Mammary epithelial cell (primary cell): ENCODE measurements at regions of chr6 and their contacts with region 1.

Region 1: GRCh38 chr6:110482774-110483398 is 6.5 kb upstream of the SLC22A16 start:
- DNase-seq: no peak
- H3K4me3 ChIP-seq: no peak overlapping the region
- H3K27ac ChIP-seq: no peak overlapping the region
- H3K4me1 ChIP-seq: peaks cover 12% of the 10 kb centered on the region
- H3K27me3 ChIP-seq: no peaks in the 10 kb centered on the region
- CTCF ChIP-seq: no peak

Region 2: DNA sequence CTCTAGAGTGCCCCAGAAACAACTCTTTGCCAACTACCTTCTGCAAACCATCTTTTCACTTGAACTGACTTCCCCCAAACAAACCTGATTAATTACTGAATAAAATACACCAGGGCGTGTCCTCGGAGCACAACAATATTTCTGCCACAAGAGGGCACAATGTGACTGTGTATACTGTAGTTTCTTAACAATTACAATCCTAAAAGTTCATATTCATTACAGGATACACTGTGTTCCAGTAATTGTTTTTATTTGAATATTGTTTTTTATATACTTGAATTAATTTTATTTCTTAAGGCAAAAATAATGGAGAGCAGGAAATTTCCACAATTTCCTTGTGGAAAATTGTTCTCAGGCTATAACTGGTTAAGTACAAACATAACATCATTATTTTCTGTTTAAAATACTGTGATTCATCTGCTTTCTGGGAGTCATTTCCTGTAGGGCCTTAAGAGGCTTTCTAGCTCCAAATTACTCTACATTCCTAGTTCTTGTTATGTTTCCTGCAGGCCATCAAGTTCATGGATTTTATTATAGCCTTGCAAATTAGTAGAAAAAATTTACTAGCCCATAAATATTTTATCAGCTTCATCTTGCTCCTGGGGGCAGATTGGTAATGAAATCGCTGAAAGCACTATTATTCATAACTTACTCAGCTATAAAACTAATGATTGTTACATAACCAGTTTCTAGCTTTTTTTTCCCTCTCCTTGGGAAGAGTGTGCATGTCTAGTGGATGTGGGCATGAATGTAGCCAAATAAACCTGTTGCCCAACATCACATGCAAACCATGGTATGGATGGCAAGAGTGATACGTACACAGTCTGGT is 45.4 kb after region 1 on chr6:
- CTCF ChIA-PET with region 1: no interaction called
- dilution Hi-C with region 1: no loop called
- in situ Hi-C with region 1: no loop called
- intact Hi-C with region 1: no loop called
- DNase-seq: peak; percentile 97
- H3K4me3 ChIP-seq: no peak overlapping the region
- H3K27ac ChIP-seq: peak overlapping the region; percentile 96
- H3K4me1 ChIP-seq: peaks cover 40% of the 10 kb centered on the region
- H3K27me3 ChIP-seq: no peaks in the 10 kb centered on the region
- CTCF ChIP-seq: peak; percentile 71 to 81

Region 3: DNA sequence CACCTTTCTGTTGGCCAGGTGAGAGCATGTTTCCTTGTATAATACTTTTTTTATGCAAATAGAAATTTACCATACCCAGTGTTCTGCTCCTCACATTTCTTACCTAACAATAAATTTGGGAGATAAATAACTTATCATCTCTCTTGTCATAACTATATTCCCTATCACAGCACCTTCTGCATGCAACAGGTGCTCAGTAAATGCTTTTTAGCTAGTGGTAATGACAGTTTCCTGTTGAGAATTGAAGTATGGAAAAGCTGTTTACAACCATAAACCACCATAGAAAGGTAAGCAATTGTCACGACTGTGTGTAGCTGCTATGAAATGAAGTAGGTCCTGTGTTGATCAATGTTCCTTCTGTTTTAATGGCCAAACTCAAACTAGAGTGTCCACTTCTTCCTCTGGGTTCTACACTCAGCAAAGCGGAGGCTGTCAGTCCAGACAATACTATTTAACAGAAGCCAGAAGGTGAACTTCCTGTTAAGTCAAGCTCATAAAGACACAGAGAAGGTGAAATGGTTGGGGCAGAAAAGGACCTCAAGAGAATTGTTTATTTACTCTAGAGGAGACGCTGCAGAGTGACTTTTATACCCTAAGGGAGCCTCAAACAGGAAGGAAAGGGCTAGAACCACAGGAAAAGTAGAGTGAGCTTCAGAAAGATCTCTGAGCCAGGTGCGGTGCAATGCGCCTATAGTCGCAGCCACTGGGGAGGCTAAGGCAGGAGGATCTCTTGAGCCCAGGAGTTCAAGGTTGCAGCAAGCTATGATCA is 77.5 kb after region 1 on chr6:
- CTCF ChIA-PET with region 1: no interaction called
- dilution Hi-C with region 1: no loop called
- in situ Hi-C with region 1: no loop called
- intact Hi-C with region 1: no loop called
- DNase-seq: no peak
- H3K4me3 ChIP-seq: no peak overlapping the region
- H3K27ac ChIP-seq: no peak overlapping the region
- H3K4me1 ChIP-seq: no peaks in the 10 kb centered on the region
- H3K27me3 ChIP-seq: no peaks in the 10 kb centered on the region
- CTCF ChIP-seq: no peak

Region 4: DNA sequence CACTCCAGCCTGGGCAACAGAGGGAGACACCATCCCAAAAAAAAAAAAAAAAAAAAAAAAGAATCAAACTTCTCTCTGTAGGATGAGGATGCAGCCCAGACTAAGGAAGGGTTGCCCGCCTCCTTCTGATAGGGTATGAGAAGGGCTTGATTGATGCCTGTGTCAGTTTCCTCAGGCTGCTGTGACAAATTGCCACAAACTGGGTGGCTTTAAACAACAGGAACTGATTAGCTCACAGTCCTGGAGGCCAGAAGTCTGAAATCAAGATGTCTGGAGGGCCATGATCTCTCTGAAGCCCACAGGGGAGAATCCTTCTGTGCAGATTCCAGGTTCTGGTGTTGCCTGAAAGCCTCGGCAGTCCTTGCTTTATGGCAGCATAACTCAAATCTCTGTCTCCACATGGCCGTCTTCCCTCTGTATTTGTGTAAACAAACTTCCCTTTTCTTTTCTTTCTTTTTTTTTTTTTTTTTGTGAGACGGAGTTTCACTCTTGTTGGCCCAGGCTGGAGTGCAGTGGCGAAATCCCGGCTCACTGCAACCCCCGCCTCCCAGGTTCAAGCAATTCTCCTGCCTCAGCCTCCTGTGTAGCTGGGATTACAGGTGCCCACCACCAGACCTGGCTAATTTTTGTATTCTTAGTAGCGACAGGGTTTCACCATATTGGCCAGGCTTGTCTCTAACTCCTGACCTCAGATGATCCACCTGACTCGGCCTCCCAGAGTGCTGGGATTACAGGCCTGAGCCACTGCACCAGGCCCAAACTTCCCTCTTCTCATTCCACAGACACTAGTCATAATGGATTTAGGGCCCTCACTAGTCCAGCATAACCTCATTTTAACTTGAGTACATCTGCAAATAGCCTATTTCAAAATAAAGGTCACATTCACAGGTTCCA is 343.6 kb after region 1 on chr6:
- CTCF ChIA-PET with region 1: no interaction called
- dilution Hi-C with region 1: no loop called
- in situ Hi-C with region 1: no loop called
- intact Hi-C with region 1: no loop called
- DNase-seq: no peak
- H3K4me3 ChIP-seq: no peak overlapping the region
- H3K27ac ChIP-seq: no peak overlapping the region
- H3K4me1 ChIP-seq: no peaks in the 10 kb centered on the region
- H3K27me3 ChIP-seq: no peaks in the 10 kb centered on the region
- CTCF ChIP-seq: no peak

Region 5: DNA sequence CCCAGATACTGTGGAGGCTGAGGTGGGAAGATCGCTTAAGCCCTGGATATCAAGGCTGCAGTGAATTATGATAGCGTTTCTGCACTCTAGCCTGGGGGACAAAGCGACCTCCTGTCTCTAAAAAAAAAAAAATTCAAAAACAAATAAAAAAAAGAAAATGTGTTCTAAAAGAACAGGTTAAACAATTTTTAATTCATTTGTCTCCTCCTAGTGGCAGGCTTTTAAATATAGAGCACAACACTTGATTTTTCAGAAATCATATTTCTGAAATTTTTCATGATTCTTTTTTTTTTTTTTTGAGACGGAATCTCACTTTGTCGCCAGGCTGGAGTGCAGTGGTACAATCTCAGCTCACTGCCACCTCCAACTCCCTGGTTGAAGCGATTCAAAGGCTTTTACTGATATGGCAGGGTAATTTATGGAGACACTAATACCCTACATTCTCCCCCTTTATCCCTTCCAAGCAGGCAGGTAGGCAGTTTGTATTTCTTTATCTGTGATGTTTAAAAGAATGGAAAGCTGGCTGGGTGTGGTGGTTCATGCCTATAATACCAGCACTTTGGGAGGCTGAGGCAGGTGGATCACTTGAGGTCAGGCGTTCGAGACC is 466.9 kb after region 1 on chr6:
- CTCF ChIA-PET with region 1: interaction called, 4 read pairs
- dilution Hi-C with region 1: no loop called
- in situ Hi-C with region 1: no loop called
- intact Hi-C with region 1: loop called (anchors 1 kb)
- DNase-seq: no peak
- H3K4me3 ChIP-seq: no peak overlapping the region
- H3K27ac ChIP-seq: no peak overlapping the region
- H3K4me1 ChIP-seq: peaks cover 22% of the 10 kb centered on the region
- H3K27me3 ChIP-seq: no peaks in the 10 kb centered on the region
- CTCF ChIP-seq: peak; percentile 37 to 51

Region 6: GRCh38 chr6:110999634-111000270 is 516.9 kb after region 1 on chr6:
- CTCF ChIA-PET with region 1: no interaction called
- dilution Hi-C with region 1: no loop called
- in situ Hi-C with region 1: no loop called
- intact Hi-C with region 1: loop called (anchors 1 kb)
- DNase-seq: peak; percentile 16
- H3K4me3 ChIP-seq: no peak overlapping the region
- H3K27ac ChIP-seq: no peak overlapping the region
- H3K4me1 ChIP-seq: no peaks in the 10 kb centered on the region
- H3K27me3 ChIP-seq: no peaks in the 10 kb centered on the region
- CTCF ChIP-seq: peak; percentile 21 to 48